ENCODE measurements at regions of chr12 and their contacts with region 1.

Region 1: GRCh38 chr12:4857472-4858291 is 52.0 kb upstream of the KCNA1 start:
- DNase-seq: peak; percentile 34
- ATAC-seq: peak; percentile 90
- H3K4me3 ChIP-seq: no peak overlapping the region
- H3K27ac ChIP-seq: no peak overlapping the region
- H3K4me1 ChIP-seq: peaks cover 34% of the 10 kb centered on the region
- H3K27me3 ChIP-seq: no peaks in the 10 kb centered on the region; a peak in 1 of 4 replicates
- CTCF ChIP-seq: peak; percentile 96; a peak in 5 of 6 replicates
- EP300 ChIP-seq: no peak
- POLR2A ChIP-seq: no peak
- RAD21 ChIP-seq: peak; percentile 93

Region 2: DNA sequence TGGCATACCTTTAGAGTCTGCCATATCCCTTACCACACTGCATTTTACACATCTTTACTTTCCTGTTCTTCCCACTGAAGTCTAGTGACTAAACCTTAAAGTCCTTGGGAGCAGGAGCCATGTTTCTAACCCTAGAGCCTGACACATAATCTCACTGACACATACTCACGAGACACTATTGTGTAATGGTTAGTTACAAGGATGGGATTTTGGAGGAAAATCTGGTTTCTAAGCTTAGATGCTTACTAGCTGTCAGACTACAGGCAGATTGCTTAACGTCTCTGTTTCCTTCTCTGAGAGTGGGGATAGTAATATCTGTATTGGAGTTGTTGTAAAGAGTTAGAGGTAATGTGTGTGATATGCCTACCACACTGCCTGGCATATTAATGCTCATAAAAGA is 301.9 kb before region 1 on chr12:
- CTCF ChIA-PET with region 1: no interaction called
- POLR2A ChIA-PET with region 1: no interaction called
- RAD21 ChIA-PET with region 1: no interaction called
- SMC1A ChIA-PET with region 1: no interaction called
- in situ Hi-C with region 1: no loop called
- intact Hi-C with region 1: no loop called
- DNase-seq: no peak
- ATAC-seq: no peak
- H3K4me3 ChIP-seq: no peak overlapping the region
- H3K27ac ChIP-seq: no peak overlapping the region
- H3K4me1 ChIP-seq: no peaks in the 10 kb centered on the region
- H3K27me3 ChIP-seq: no peaks in the 10 kb centered on the region
- CTCF ChIP-seq: no peak
- EP300 ChIP-seq: no peak
- POLR2A ChIP-seq: no peak
- RAD21 ChIP-seq: no peak

Region 3: GRCh38 chr12:4829161-4829792 is 28.4 kb before region 1 on chr12:
- CTCF ChIA-PET with region 1: interaction called, 10 read pairs
- POLR2A ChIA-PET with region 1: no interaction called
- RAD21 ChIA-PET with region 1: interaction called, 5 read pairs
- SMC1A ChIA-PET with region 1: interaction called, 7 read pairs
- in situ Hi-C with region 1: no loop called
- intact Hi-C with region 1: no loop called
- DNase-seq: peak; percentile 73
- ATAC-seq: peak; percentile 89
- H3K4me3 ChIP-seq: peak overlapping the region; percentile 58
- H3K27ac ChIP-seq: peak overlapping the region; percentile 97
- H3K4me1 ChIP-seq: peaks cover 27% of the 10 kb centered on the region
- H3K27me3 ChIP-seq: no peaks in the 10 kb centered on the region
- CTCF ChIP-seq: no peak
- EP300 ChIP-seq: peak; percentile 30 to 66; a peak in 2 of 4 replicates
- POLR2A ChIP-seq: no peak; the same call in 1 of the 2 replicates
- RAD21 ChIP-seq: no peak

Region 4: DNA sequence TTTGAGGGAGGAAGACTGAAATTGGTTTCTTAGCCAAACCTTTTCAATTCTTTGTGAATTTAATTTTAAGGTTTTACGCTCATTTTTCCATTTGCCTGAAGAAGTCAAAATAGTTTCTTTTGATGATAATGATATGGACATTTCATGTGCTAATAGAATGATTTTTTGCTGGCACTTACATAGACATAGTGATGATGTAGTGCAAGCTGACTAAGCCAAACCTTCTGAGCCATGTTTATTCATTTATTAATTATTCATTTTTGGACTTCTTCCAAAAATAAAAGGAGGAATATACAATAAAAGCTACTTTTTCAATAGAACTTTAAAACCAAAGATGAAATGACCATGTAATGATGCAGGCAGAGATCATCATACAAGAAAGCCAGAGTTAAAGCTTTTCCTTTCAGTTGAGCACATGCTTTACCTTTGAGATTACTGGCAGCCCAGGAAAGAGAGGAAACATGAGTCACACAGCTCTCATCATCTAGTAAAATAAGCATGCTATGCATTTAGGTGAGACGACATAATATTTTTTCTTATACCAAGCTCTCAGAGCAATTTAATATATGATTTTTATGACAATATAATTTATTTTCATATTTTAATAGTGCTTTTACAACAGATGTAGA is 76.8 kb after region 1 on chr12:
- CTCF ChIA-PET with region 1: interaction called, 14 read pairs
- POLR2A ChIA-PET with region 1: interaction called, 3 read pairs
- RAD21 ChIA-PET with region 1: no interaction called
- SMC1A ChIA-PET with region 1: interaction called, 5 read pairs
- in situ Hi-C with region 1: no loop called
- intact Hi-C with region 1: no loop called
- DNase-seq: no peak
- ATAC-seq: no peak
- H3K4me3 ChIP-seq: no peak overlapping the region
- H3K27ac ChIP-seq: no peak overlapping the region
- H3K4me1 ChIP-seq: no peaks in the 10 kb centered on the region
- H3K27me3 ChIP-seq: no peaks in the 10 kb centered on the region
- CTCF ChIP-seq: no peak
- EP300 ChIP-seq: no peak
- POLR2A ChIP-seq: no peak
- RAD21 ChIP-seq: no peak

Region 5: GRCh38 chr12:4962539-4963486 is 105.1 kb after region 1 on chr12:
- CTCF ChIA-PET with region 1: interaction called, 17 read pairs
- POLR2A ChIA-PET with region 1: no interaction called
- RAD21 ChIA-PET with region 1: interaction called, 3 read pairs
- SMC1A ChIA-PET with region 1: interaction called, 4 read pairs
- in situ Hi-C with region 1: no loop called
- intact Hi-C with region 1: loop called (anchors 5 kb)
- DNase-seq: no peak
- ATAC-seq: peak; percentile 26; the same call in 2 of the 3 replicates
- H3K4me3 ChIP-seq: no peak overlapping the region
- H3K27ac ChIP-seq: no peak overlapping the region
- H3K4me1 ChIP-seq: peaks cover 3% of the 10 kb centered on the region
- H3K27me3 ChIP-seq: 0 out of 4 replicates have a peak, but pooled peaks cover 0 to 2% of the 10 kb centered on the region in 2 experiments
- CTCF ChIP-seq: no peak
- EP300 ChIP-seq: no peak
- POLR2A ChIP-seq: no peak
- RAD21 ChIP-seq: no peak

Region 6: DNA sequence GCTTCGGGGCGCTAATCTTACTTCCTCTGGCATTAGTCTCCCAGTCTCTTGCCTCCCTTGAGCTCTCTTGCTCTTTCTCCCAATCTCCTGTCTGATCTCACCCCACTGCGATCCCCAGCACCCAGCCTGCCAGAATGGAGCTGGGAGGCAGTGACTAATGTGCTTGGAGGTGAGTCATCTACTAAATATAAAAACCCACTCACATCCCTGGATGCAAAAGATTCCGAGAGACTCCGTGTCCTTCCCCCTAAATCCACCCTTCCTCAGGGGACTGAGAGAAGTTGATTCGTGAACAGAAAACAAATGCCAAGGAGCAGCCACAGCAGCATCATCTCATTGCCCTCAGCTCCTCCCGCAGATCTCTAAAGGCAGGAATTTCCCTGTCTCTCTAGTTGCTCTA is 140.3 kb after region 1 on chr12:
- CTCF ChIA-PET with region 1: interaction called, 84 read pairs
- POLR2A ChIA-PET with region 1: interaction called, 3 read pairs
- RAD21 ChIA-PET with region 1: interaction called, 40 read pairs
- SMC1A ChIA-PET with region 1: interaction called, 26 read pairs
- in situ Hi-C with region 1: loop called (anchors 5 kb)
- intact Hi-C with region 1: loop called (anchors 1 kb)
- DNase-seq: no peak
- ATAC-seq: no peak
- H3K4me3 ChIP-seq: no peak overlapping the region
- H3K27ac ChIP-seq: no peak overlapping the region
- H3K4me1 ChIP-seq: peaks cover 10% of the 10 kb centered on the region; the same call in 1 of the 2 replicates
- H3K27me3 ChIP-seq: 0 out of 4 replicates have a peak, but pooled peaks cover 2 to 3% of the 10 kb centered on the region in 2 experiments
- CTCF ChIP-seq: no peak
- EP300 ChIP-seq: no peak
- POLR2A ChIP-seq: no peak
- RAD21 ChIP-seq: no peak

Region 7: DNA sequence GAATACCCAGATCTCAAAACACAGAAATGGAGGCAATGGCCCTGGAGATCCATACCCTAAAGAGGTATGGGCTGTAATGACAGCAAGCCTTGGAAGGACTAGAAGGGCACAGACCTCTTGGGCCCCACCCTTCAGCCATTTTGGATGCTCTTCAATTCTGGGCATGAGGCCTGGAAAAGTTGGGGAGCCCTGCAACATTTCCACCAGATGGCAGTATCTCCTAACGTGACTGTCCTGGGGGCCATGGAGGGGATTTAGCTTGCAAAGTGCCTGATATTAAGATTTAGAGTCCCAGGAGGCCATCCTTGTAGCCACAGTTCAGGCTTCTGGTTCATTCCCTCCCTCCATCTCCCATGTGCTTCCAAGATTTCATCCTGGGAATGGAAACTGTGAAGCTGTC is 216.2 kb after region 1 on chr12:
- CTCF ChIA-PET with region 1: interaction called, 5 read pairs
- POLR2A ChIA-PET with region 1: no interaction called
- RAD21 ChIA-PET with region 1: no interaction called
- SMC1A ChIA-PET with region 1: no interaction called
- in situ Hi-C with region 1: loop called (anchors 5 kb)
- intact Hi-C with region 1: no loop called
- DNase-seq: no peak
- ATAC-seq: peak; percentile 45; the same call in 1 of the 3 replicates
- H3K4me3 ChIP-seq: no peak overlapping the region
- H3K27ac ChIP-seq: no peak overlapping the region
- H3K4me1 ChIP-seq: no peaks in the 10 kb centered on the region
- H3K27me3 ChIP-seq: peaks cover 0 to 3% of the 10 kb centered on the region in 2 experiments; a peak in 1 of 4 replicates
- CTCF ChIP-seq: peak; percentile 23 to 33 (median 27); a peak in 3 of 6 replicates
- EP300 ChIP-seq: no peak
- POLR2A ChIP-seq: no peak
- RAD21 ChIP-seq: peak; percentile 32

Measured in GM12878 (cell line).